PC-9 (cell line): ENCODE measurements at regions of chr5 and their contacts with region 1.

Region 1: DNA sequence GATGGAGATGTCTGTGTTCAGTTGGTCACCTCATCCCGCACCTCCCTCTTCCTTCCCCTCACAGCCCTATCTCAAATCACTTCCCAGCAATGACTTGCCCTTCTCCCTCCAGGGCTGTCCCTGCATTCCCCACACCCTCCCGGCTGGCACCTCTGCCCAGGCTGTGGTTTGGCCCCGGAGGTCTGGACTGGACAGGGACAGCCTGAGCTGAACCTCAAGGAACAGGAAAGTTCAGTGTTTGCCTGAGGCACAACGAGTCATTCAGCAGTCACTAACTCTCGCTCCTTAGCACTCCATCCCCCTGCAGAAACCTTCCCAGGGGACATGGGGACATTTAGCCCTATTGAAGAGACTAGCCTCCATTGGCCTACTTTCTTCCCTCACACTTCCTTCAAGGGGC is 58.3 kb upstream of the MAP3K1 start:
- DNase-seq: peak; percentile 94 to 95
- H3K4me3 ChIP-seq: 0 out of 2 replicates have a peak overlapping the region, but pooled peaks have one; percentile 13
- H3K27ac ChIP-seq: peak overlapping the region; percentile 65
- H3K4me1 ChIP-seq: peaks cover 48% of the 10 kb centered on the region
- H3K27me3 ChIP-seq: no peaks in the 10 kb centered on the region
- CTCF ChIP-seq: no peak

Region 2: DNA sequence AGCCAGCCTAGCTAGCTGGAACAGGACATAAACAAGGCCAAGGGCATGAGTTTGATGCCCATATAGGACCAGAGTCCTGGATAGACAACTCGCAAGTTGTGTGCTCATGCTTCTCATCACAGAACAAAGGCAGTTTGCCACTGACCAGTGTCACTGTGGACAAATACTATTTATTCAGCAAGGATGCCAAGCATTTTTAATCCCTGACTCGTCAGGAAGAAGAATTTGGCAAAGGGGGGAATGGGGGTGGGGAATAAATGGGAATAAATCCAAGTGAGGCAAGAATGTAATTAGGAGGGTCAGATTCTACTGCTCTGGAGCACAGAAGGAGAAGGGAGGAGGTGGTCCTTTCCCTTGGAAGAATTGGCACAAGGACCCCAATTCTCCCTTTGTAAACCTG is 477.1 kb before region 1 on chr5:
- CTCF ChIA-PET with region 1: interaction called, 13 read pairs
- POLR2A ChIA-PET with region 1: no interaction called
- intact Hi-C with region 1: no loop called
- DNase-seq: peak; percentile 38 to 76
- H3K4me3 ChIP-seq: no peak overlapping the region
- H3K27ac ChIP-seq: 0 out of 2 replicates have a peak overlapping the region, but pooled peaks have one; percentile 17
- H3K4me1 ChIP-seq: peaks cover 38% of the 10 kb centered on the region
- H3K27me3 ChIP-seq: no peaks in the 10 kb centered on the region
- CTCF ChIP-seq: no peak

Region 3: GRCh38 chr5:56522960-56523359 is 234.1 kb before region 1 on chr5:
- CTCF ChIA-PET with region 1: no interaction called
- POLR2A ChIA-PET with region 1: no interaction called
- intact Hi-C with region 1: loop called (anchors 5 kb)
- DNase-seq: peak; percentile 21 to 64
- H3K4me3 ChIP-seq: no peak overlapping the region
- H3K27ac ChIP-seq: peak overlapping the region; percentile 18
- H3K4me1 ChIP-seq: peaks cover 59% of the 10 kb centered on the region
- H3K27me3 ChIP-seq: no peaks in the 10 kb centered on the region
- CTCF ChIP-seq: no peak

Region 4: GRCh38 chr5:56638061-56638621 is 118.9 kb before region 1 on chr5:
- CTCF ChIA-PET with region 1: no interaction called
- POLR2A ChIA-PET with region 1: no interaction called
- intact Hi-C with region 1: loop called (anchors 5 kb)
- DNase-seq: peak; percentile 64 to 70
- H3K4me3 ChIP-seq: no peak overlapping the region
- H3K27ac ChIP-seq: no peak overlapping the region
- H3K4me1 ChIP-seq: peaks cover 40% of the 10 kb centered on the region
- H3K27me3 ChIP-seq: no peaks in the 10 kb centered on the region
- CTCF ChIP-seq: no peak